ENCODE measurements at regions of chr5 and their contacts with region 1.

Region 1: DNA sequence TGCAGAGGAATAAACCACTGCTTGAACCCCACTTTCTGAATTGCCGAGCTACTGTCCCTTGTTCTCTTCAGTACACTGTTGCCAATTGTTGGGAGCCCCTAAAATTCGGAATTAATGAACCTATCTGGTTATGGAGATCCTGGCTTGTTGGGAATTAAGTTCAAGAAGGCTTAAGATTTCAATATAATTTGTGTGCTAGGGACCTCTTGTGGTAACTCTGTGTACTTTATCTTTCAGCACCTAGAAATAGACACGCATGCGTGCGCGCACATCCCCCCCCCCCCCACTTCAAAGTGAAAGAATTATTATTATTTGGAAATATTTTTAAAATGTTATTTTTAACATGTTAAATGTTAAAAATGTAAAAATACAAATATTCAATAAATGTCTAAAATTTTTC is 53.3 kb upstream of the FAM169A start:
- DNase-seq: no peak
- H3K4me3 Mint-ChIP-seq: no peak overlapping the region
- H3K27ac Mint-ChIP-seq: no peak overlapping the region
- H3K4me1 Mint-ChIP-seq: no peaks in the 10 kb centered on the region
- H3K27me3 Mint-ChIP-seq: peaks cover 4% of the 10 kb centered on the region

Region 2: GRCh38 chr5:74673011-74673790 is 246.3 kb before region 1 on chr5:
- intact Hi-C with region 1: loop called (anchors 1 kb)
- DNase-seq: no peak
- H3K4me3 Mint-ChIP-seq: no peak overlapping the region
- H3K27ac Mint-ChIP-seq: no peak overlapping the region
- H3K4me1 Mint-ChIP-seq: no peaks in the 10 kb centered on the region
- H3K27me3 Mint-ChIP-seq: peaks cover 7% of the 10 kb centered on the region

Region 3: DNA sequence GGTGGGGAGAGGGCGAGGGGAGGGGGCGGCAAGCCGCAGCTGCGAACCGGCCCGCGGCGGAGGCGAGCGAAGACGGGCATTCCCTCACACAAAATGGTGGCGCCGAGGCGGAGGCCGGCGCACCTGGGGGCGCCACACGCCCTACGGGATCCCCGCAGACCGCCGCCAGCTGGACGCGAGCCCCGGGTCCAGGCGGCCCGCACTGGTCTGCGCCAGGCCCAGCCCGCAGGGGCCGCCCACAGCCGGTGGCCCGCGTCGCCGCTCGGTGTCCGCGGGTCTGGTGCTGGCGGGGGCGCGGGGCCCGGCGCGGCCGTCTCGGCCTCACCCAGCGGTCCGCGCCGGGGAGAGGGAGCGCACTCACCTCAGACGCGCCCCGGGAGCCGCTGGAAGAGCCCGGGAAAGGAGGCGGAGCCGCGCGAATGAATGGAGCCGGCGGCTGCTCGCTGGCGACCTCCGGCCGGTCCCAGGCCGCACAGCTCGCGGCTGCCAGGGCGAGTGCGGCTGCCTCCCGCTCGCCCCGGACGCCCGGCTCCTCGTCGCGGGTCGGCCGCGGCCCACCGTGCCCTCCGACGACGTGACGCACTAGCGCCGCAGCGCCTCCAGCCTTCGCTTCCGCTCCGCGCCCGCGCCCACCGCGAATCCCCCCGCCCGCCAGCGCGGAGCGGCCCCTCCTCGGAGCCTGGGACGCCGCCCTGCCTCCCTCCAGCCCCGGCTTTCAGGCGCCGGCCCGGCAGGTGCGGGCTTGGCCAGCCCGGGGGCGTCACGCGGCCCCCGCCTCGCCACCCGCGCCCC is 53.5 kb before region 1 on chr5 and contains the start of gene FAM169A:
- intact Hi-C with region 1: loop called (anchors 5 kb)
- DNase-seq: peak; percentile 19
- H3K4me3 Mint-ChIP-seq: peak within 1 kb of the TSS; percentile 88
- H3K27ac Mint-ChIP-seq: peak within 1 kb of the TSS; percentile 76
- H3K4me1 Mint-ChIP-seq: peaks cover 11% of the 10 kb centered on the region
- H3K27me3 Mint-ChIP-seq: peaks cover 25% of the 10 kb centered on the region
- total RNA-seq, gene FAM169A: 3.2 and 3.5 TPM in 2 replicates

Region 4: GRCh38 chr5:75059912-75060545 is 140.5 kb after region 1 on chr5:
- intact Hi-C with region 1: no loop called
- DNase-seq: no peak
- H3K4me3 Mint-ChIP-seq: no peak overlapping the region
- H3K27ac Mint-ChIP-seq: peak overlapping the region; percentile 45
- H3K4me1 Mint-ChIP-seq: peaks cover 36% of the 10 kb centered on the region
- H3K27me3 Mint-ChIP-seq: peaks cover 8% of the 10 kb centered on the region

Region 5: GRCh38 chr5:75265731-75266130 is 346.2 kb after region 1 on chr5:
- intact Hi-C with region 1: loop called (anchors 2 kb)
- DNase-seq: no peak
- H3K4me3 Mint-ChIP-seq: no peak overlapping the region
- H3K27ac Mint-ChIP-seq: no peak overlapping the region
- H3K4me1 Mint-ChIP-seq: no peaks in the 10 kb centered on the region
- H3K27me3 Mint-ChIP-seq: peaks cover 5% of the 10 kb centered on the region

Measured in activated T-helper 1 cell treated with anti-CD3 and anti-CD28 coated beads, Interleukin-12 subunit alpha, Interleukin-12 subunit beta, Interleukin-2, Interleukin-4 antibody, amounts not matched to agents 30 ng/mL and 10 ng/mL and 1 ng/mL, durations not matched to agents 14 hours and 24 hours and 36 hours (primary cell).